Naive thymus-derived CD8-positive, alpha-beta T cell (primary cell): ENCODE measurements at regions of chr12 and their contacts with region 1.

Region 1: GRCh38 chr12:125065021-125065795 is at the start of gene AACS:
- DNase-seq: peak; percentile 41 to 86 (median 74)
- ATAC-seq: peak; percentile 93 to 94
- H3K4me3 Mint-ChIP-seq: peak within 1 kb of the TSS; percentile 79 to 89 (median 87)
- H3K27ac Mint-ChIP-seq: peak within 1 kb of the TSS; percentile 55 to 88 (median 80)
- H3K4me1 Mint-ChIP-seq: peaks cover 9 to 24% (median 21%) of the 10 kb centered on the region in 4 donors
- H3K27me3 Mint-ChIP-seq: peaks cover 0 to 5% (median 1%) of the 10 kb centered on the region in 5 donors
- polyA plus RNA-seq, gene AACS: 7.4 to 17.2 (median 10.6) TPM

Region 2: DNA sequence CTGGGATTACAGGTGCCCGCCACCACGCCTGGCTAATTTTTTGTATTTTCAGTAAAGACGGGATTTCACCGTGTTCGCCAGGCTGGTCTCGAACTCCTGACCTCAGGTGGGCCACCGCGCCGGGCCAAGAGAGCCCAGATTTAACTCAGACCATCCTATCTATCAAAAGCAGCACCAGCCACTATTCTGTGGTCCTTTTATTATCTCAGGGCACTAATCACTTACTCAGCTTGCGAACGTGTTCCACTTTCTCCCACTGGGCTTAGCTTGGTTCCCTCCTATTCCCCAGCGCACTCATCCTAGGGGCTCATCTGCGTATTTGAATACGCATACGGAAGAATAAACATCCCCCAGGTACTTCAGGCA is 16.1 kb before region 1 on chr12:
- POLR2A ChIA-PET with region 1: interaction called, 10 read pairs
- DNase-seq: no peak
- ATAC-seq: no peak
- H3K4me3 Mint-ChIP-seq: peak overlapping the region; percentile 86 to 96 (median 89)
- H3K27ac Mint-ChIP-seq: peak overlapping the region; percentile 29 to 96 (median 87)
- H3K4me1 Mint-ChIP-seq: peaks cover 2 to 15% (median 8%) of the 10 kb centered on the region in 4 donors
- H3K27me3 Mint-ChIP-seq: no peaks in the 10 kb centered on the region